Pancreas (tissue), 10 donors: ENCODE measurements at regions of chr17 and their contacts with region 1.

Region 1: GRCh38 chr17:27654654-27655524 is 23.9 kb downstream of the LGALS9 start:
- DNase-seq: peak in 5 of 6 donors; percentile 43 to 92 (median 74)
- ATAC-seq: peak; percentile 62 to 83 (median 74)
- H3K4me3 ChIP-seq: no peak overlapping the region
- H3K27ac ChIP-seq: no peak overlapping the region
- H3K4me1 ChIP-seq: no peaks in the 10 kb centered on the region
- H3K27me3 ChIP-seq: no peaks in the 10 kb centered on the region
- CTCF ChIP-seq: peak; percentile 81 to 98 (median 92)

Region 2: DNA sequence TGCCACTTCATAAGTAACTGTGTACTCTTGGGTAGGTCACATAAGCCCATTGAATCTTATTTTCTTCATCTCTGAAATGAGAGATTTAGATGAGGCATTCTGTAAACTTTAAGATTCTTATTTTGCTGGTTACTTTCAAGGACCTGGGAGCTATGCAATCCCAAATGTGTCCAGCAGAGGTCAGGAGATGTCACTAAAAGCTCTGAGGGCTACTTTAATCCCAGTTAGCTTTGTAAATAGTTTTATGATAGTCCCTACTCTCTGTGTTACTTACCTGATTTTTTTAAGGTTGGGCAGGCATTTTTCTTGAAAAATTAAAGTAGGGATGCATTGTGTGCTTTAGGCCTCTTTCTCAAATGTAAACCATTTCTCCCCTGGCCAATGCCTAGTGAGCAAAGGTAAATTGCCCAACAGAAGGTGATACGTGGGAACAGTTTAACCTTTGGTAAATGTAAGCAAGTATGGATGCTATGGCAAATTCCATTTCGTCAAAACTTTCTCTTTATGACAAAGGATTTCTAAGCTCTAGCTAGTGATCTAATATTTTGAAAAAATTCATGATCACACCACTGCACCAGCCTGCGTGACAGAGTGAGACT is 418.1 kb before region 1 on chr17:
- intact Hi-C with region 1: loop called in 2 of 3 experiments (anchors 5 to 10 kb)
- DNase-seq: peak in 5 of 6 donors; percentile 55 to 85 (median 71)
- ATAC-seq: peak; percentile 82 to 93 (median 93)
- H3K4me3 ChIP-seq: no peak overlapping the region
- H3K27ac ChIP-seq: no peak overlapping the region
- H3K4me1 ChIP-seq: peaks cover 0 to 4% (median 0%) of the 10 kb centered on the region in 3 donors
- H3K27me3 ChIP-seq: no peaks in the 10 kb centered on the region
- CTCF ChIP-seq: peak; percentile 79 to 92 (median 85)

Region 3: DNA sequence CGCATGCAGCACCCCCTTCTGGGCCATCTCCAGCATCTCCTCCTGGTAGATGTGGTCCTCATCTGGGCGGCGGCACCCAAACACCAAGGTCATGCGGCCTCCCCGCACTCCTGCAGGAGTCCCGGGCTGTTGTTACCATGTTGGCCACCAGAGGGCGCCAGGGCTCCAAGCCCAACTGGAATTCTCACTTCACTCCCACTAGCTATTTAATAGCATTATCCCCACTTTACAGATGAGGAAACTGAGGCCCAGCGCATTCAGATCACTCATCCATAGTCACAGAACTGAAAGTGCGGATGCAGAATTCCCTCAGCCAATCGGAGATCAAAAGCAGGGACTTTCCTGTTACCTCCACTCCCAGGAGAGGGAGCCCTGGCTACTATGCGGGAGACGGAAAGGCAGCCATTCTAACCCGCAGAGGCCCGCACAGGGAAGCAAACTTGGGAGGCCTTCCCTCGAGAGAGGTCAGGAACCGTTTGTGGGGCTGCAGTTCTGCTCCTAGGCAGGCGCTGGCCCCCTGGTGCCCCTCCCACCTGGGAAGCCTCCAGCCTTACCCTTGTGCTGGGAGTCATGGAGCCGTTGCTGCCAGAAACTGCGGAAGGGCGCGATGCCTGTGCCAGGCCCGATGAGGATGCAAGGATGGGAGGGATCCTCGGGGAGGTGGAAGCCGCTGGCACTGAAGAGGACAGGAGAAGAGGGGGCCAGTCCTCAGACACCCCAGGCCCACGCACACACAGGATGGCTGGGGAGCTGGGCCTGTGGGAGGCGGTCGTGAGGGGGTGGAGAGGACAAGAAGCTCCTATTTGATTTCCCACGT is 105.4 kb after region 1 on chr17:
- intact Hi-C with region 1: loop called in 2 of 3 experiments (anchors 5 kb)
- DNase-seq: peak; percentile 35 to 93 (median 74)
- ATAC-seq: peak; percentile 69 to 84 (median 79)
- H3K4me3 ChIP-seq: no peak overlapping the region
- H3K27ac ChIP-seq: no peak overlapping the region
- H3K4me1 ChIP-seq: no peaks in the 10 kb centered on the region
- H3K27me3 ChIP-seq: no peaks in the 10 kb centered on the region
- CTCF ChIP-seq: peak; percentile 80 to 96 (median 93)

Region 4: DNA sequence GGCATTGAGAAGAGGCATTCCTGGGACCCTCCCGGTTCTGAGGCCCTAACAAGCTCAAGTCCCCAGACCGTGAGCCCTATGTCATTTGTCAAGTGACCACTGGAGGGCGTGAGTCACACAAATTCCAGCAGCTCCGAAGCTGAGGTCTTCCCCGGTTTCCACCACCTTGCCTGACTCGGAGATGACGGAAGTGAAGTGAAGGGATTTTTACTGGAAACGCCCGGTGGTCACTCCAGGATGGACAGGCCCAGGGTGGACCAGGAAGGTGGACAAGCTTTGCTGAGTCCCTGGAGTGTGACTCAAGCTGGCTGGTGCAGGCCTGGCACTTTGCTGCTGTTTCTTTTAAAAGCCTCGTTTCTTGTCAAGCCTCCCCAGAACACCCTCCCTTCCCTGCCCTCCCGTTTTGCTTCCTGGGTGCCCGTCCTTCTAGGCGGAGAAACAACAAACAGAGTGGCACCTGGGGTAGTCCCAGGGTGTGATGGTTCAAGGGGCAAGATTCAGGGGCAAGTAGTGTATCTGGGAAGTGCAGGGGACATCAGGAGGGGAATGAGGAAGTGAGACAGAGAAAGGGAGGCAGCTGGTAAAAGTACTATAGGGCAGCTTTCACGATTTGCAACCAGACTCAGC is 150.7 kb after region 1 on chr17:
- intact Hi-C with region 1: no loop called
- DNase-seq: peak; percentile 80 to 91 (median 82)
- ATAC-seq: peak; percentile 93 to 98 (median 98)
- H3K4me3 ChIP-seq: peak overlapping the region in 2 of 4 donors; percentile 27 to 32
- H3K27ac ChIP-seq: peak overlapping the region; percentile 10 to 73 (median 49)
- H3K4me1 ChIP-seq: peaks cover 0 to 6% (median 0%) of the 10 kb centered on the region in 3 donors
- H3K27me3 ChIP-seq: no peaks in the 10 kb centered on the region
- CTCF ChIP-seq: peak; percentile 73 to 86 (median 84)

Region 5: GRCh38 chr17:27892866-27893769 is 238.2 kb after region 1 on chr17 and contains the start of gene LYRM9:
- intact Hi-C with region 1: no loop called
- DNase-seq: peak; percentile 86 to 100 (median 94)
- ATAC-seq: peak; percentile 92 to 98 (median 98)
- H3K4me3 ChIP-seq: peak within 1 kb of the TSS; percentile 56 to 80 (median 62)
- H3K27ac ChIP-seq: peak within 1 kb of the TSS; percentile 76 to 90 (median 82)
- H3K4me1 ChIP-seq: peaks cover 10 to 22% (median 15%) of the 10 kb centered on the region in 3 donors
- H3K27me3 ChIP-seq: no peaks in the 10 kb centered on the region
- CTCF ChIP-seq: peak; percentile 83 to 94 (median 89)
- total RNA-seq, gene LYRM9: 4.8 to 11.1 (median 8.4) TPM